ENCODE measurements at regions of chr14 and their contacts with region 1.

Region 1: GRCh38 chr14:100900837-100901390 is 2.6 kb downstream of the RTL1 start:
- DNase-seq: peak; percentile 35 to 54
- ATAC-seq: peak; percentile 54 to 77; a peak in 3 of 6 replicates
- H3K4me3 ChIP-seq: no peak overlapping the region
- H3K27ac ChIP-seq: 0 out of 6 replicates have a peak overlapping the region, but pooled peaks of 1 of the 2 experiments have one; percentile 44
- H3K4me1 ChIP-seq: peaks cover 5% of the 10 kb centered on the region; the same call in 2 of the 3 replicates
- CTCF ChIP-seq: peak; percentile 54
- EP300 ChIP-seq: no peak
- POLR2A ChIP-seq: no peak
- RAD21 ChIP-seq: peak; percentile 77 to 78

Region 2: GRCh38 chr14:100709289-100710284 is 191.3 kb before region 1 on chr14:
- CTCF ChIA-PET with region 1: interaction called, 16 read pairs
- POLR2A ChIA-PET with region 1: no interaction called
- DNase-seq: peak in 1 of 2 experiments; percentile 26
- ATAC-seq: peak; percentile 40 to 82; a peak in 4 of 6 replicates
- H3K4me3 ChIP-seq: no peak overlapping the region
- H3K27ac ChIP-seq: peak overlapping the region in 1 of 2 experiments; percentile 19; a peak in 1 of 6 replicates
- H3K4me1 ChIP-seq: no peaks in the 10 kb centered on the region
- CTCF ChIP-seq: peak; percentile 51
- EP300 ChIP-seq: no peak
- POLR2A ChIP-seq: no peak
- RAD21 ChIP-seq: peak; percentile 33 to 56

Region 3: GRCh38 chr14:100880271-100881101 is 20.4 kb before region 1 on chr14:
- CTCF ChIA-PET with region 1: interaction called, 13 read pairs
- POLR2A ChIA-PET with region 1: no interaction called
- DNase-seq: no peak
- ATAC-seq: no peak
- H3K4me3 ChIP-seq: no peak overlapping the region
- H3K27ac ChIP-seq: no peak overlapping the region
- H3K4me1 ChIP-seq: no peaks in the 10 kb centered on the region
- CTCF ChIP-seq: no peak
- EP300 ChIP-seq: no peak
- POLR2A ChIP-seq: no peak
- RAD21 ChIP-seq: no peak